BJ (cell line): ENCODE measurements at regions of chr6 and their contacts with region 1.

Region 1: GRCh38 chr6:169789982-169790927 is 38.8 kb downstream of the ERMARD start:
- DNase-seq: peak; percentile 21
- H3K4me3 ChIP-seq: peak overlapping the region; percentile 45
- H3K27me3 ChIP-seq: peaks cover 1% of the 10 kb centered on the region; the same call in 1 of the 2 replicates
- CTCF ChIP-seq: peak; percentile 99

Region 2: GRCh38 chr6:169665289-169665688 is 125.0 kb before region 1 on chr6:
- CTCF ChIA-PET with region 1: no interaction called
- POLR2A ChIA-PET with region 1: no interaction called
- DNase-seq: no peak
- H3K4me3 ChIP-seq: no peak overlapping the region
- H3K27me3 ChIP-seq: no peaks in the 10 kb centered on the region
- CTCF ChIP-seq: no peak

Region 3: GRCh38 chr6:169800668-169801395 is 10.6 kb after region 1 on chr6:
- CTCF ChIA-PET with region 1: interaction called, 39 read pairs
- POLR2A ChIA-PET with region 1: no interaction called
- DNase-seq: no peak
- H3K4me3 ChIP-seq: no peak overlapping the region
- H3K27me3 ChIP-seq: peaks cover 2% of the 10 kb centered on the region; the same call in 1 of the 2 replicates
- CTCF ChIP-seq: no peak

Region 4: DNA sequence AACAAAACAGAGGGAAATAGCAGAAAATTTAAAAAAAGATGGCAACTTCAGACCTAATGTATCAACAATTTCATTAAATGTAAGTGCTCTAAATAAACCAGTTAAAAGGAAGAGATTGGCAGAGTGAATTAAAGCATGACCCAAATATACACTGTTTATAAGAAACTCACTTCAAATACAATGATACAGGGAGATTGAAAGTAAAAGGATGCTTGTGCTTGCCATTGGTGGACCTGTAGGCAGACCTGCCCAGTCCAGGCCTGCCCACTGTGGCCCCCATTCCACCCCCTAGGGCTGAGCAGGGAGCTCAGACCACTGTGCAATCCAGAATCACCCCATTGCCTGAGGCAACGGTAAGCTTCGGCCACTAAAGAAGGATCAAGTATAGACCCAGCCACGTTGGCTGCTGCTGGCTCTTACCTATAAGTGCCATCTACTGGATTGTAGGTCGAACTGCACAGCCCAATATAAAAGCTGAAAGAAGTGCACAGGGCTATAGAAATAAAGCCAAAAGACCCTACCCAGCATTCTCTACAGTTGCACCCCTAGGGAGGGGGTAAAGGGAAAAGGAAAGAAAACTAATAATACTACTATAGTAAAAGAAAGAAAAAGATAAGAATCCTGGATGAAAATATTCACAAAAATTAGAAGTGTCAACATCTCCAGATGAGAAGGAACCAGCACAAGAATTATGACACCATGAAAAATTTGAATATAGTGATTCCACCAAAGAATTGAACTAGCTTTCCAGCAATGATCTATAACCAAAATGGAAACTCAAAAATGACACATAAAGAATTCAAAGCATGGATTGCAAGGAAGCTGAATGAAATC is 726.7 kb after region 1 on chr6:
- CTCF ChIA-PET with region 1: interaction called, 22 read pairs
- POLR2A ChIA-PET with region 1: no interaction called
- DNase-seq: no peak
- H3K4me3 ChIP-seq: no peak overlapping the region
- H3K27me3 ChIP-seq: no peaks in the 10 kb centered on the region
- CTCF ChIP-seq: peak; percentile 86